ENCODE measurements at regions of chr4 and their contacts with region 1.

Region 1: GRCh38 chr4:39446751-39447573 is 11.8 kb downstream of the RPL9 start:
- DNase-seq: no peak
- H3K4me3 ChIP-seq: no peak overlapping the region
- H3K4me1 ChIP-seq: no peaks in the 10 kb centered on the region
- H3K27me3 ChIP-seq: no peaks in the 10 kb centered on the region

Region 2: GRCh38 chr4:38889143-38889542 is 557.8 kb before region 1 on chr4:
- in situ Hi-C with region 1: loop called (anchors 25 kb)
- DNase-seq: no peak
- H3K4me3 ChIP-seq: no peak overlapping the region
- H3K4me1 ChIP-seq: peaks cover 3% of the 10 kb centered on the region; the same call in 1 of the 2 replicates
- H3K27me3 ChIP-seq: no peaks in the 10 kb centered on the region

Region 3: DNA sequence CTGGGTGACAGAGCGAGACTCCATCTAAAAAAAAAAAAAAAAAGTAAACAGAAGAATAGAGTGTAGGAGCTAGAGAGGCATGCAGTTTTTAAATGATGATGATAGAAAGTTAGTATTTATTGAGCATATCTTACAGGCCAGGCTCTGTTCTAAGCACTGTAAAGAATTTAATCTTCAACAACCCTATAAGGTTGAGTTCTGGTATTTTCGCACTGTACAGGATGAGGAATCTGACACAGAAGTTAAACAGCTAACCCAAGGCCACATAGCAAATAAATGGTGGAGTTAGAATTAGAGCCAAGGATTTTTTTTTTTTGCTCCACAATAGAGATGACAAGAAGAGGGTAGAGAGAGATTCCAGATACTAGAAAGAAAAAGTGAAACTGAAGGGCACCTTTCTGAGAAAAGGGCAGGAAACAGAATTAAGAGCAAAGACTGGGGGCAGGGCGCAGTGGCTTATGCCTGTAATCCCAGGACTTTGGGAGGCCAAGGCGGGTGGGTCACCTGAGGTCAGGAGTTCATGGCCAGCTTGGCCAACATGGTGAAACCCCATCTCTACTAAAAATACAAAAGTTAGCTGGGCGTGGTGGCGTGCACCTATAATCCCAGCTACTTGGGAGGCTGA is 328.8 kb before region 1 on chr4:
- in situ Hi-C with region 1: no loop called
- DNase-seq: no peak
- H3K4me3 ChIP-seq: no peak overlapping the region
- H3K4me1 ChIP-seq: no peaks in the 10 kb centered on the region; the same call in 1 of the 2 replicates
- H3K27me3 ChIP-seq: no peaks in the 10 kb centered on the region

Region 4: DNA sequence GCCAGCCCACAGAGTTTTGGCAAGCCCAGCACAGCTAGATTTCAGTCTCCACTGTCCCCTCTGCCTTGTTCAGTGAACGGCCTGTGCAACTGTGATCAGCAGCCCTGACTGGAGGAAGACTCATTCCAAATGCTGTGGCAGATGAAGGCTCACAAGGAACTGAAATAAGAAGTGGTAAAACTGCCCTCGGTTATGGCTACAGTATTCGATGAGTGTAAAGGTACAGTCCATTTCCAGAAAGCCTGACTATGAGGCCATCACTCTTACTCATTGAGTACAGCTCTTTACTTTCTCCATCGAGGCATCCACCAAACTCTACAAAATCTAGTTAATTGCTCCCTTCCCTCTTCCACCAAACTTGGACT is 818.9 kb after region 1 on chr4:
- in situ Hi-C with region 1: no loop called
- DNase-seq: no peak
- H3K4me3 ChIP-seq: no peak overlapping the region
- H3K4me1 ChIP-seq: peaks cover 13% of the 10 kb centered on the region
- H3K27me3 ChIP-seq: no peaks in the 10 kb centered on the region

Measured in HAP-1 (cell line).